Activated naive CD8-positive, alpha-beta T cell treated with anti-CD3 and anti-CD28 coated beads, Interleukin-2, amount 10 ng/mL, durations not matched to agents 7 days and 5 days (primary cell): ENCODE measurements at regions of chr7 and their contacts with region 1.

Region 1: DNA sequence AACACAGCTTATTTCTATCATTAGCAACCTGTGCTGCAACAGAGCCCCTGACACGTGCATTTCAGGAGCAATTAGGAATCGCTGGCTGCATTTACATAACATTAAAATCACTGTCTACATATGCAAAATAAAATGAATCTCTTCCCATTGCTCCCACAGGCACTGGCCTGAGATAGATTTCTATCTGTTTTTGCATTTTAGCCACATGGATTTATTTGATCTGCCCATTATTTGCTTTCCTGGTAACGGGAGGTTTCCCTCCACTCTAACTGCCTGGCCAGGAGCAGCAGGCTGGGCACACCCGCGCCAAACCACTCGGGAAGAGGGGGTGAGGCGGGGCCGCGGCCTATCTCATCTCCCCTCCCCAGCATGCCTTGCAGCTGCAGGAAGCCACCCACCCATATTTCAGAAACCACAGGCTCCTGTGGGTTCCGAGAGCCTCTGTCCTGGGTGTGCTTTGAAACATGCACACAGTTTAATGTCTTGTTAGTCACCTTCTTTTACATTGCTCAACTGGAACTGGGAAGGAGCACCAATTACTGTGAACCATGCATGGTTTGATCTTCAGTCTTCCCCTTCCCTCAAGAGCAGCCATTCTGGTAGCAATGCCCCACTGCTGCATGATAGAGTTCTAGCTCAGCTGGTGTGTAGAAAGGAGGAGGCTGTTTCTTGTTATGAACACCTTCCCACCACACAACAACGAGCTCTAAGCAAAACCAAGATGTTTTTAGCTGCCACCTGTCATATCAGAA is 37.7 kb upstream of the IKZF1 start:
- DNase-seq: peak; percentile 80
- ATAC-seq: peak; percentile 65
- H3K4me3 Mint-ChIP-seq: peak overlapping the region; percentile 78
- H3K27ac Mint-ChIP-seq: peak overlapping the region; percentile 88
- H3K4me1 Mint-ChIP-seq: peaks cover 77% of the 10 kb centered on the region
- H3K27me3 Mint-ChIP-seq: no peaks in the 10 kb centered on the region

Region 2: GRCh38 chr7:50197549-50197948 is 69.3 kb before region 1 on chr7:
- POLR2A ChIA-PET with region 1: no interaction called
- DNase-seq: no peak
- ATAC-seq: no peak
- H3K4me3 Mint-ChIP-seq: no peak overlapping the region
- H3K27ac Mint-ChIP-seq: no peak overlapping the region
- H3K4me1 Mint-ChIP-seq: peaks cover 6% of the 10 kb centered on the region
- H3K27me3 Mint-ChIP-seq: peaks cover 3% of the 10 kb centered on the region

Region 3: GRCh38 chr7:50212666-50213621 is 53.9 kb before region 1 on chr7:
- POLR2A ChIA-PET with region 1: interaction called, 68 read pairs
- DNase-seq: no peak
- ATAC-seq: peak; percentile 77
- H3K4me3 Mint-ChIP-seq: peak overlapping the region; percentile 56
- H3K27ac Mint-ChIP-seq: peak overlapping the region; percentile 86
- H3K4me1 Mint-ChIP-seq: peaks cover 88% of the 10 kb centered on the region
- H3K27me3 Mint-ChIP-seq: no peaks in the 10 kb centered on the region

Region 4: DNA sequence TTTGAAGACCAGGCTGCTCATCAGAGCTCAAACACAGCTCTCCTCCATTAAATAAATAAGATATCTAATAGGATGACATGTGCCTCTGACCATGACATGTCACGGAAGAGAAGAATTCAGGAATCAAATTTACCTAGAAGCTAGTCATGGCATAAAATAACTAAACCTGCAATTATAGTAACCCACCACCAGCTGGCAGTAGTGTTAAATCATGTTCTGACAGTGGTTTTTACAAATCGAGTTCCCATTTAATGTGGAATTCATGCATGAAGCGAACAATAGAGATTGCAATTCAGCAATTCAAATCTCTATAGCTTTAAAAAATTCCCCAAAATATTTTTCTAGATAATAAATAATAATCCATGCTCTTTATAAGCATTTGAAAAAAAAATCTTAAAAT is 36.8 kb before region 1 on chr7:
- POLR2A ChIA-PET with region 1: interaction called, 35 read pairs
- DNase-seq: no peak
- ATAC-seq: no peak
- H3K4me3 Mint-ChIP-seq: no peak overlapping the region
- H3K27ac Mint-ChIP-seq: no peak overlapping the region
- H3K4me1 Mint-ChIP-seq: peaks cover 39% of the 10 kb centered on the region
- H3K27me3 Mint-ChIP-seq: no peaks in the 10 kb centered on the region

Region 5: GRCh38 chr7:50281680-50282445 is 15.1 kb after region 1 on chr7:
- POLR2A ChIA-PET with region 1: interaction called, 61 read pairs
- DNase-seq: no peak
- ATAC-seq: peak; percentile 83
- H3K4me3 Mint-ChIP-seq: peak overlapping the region; percentile 82
- H3K27ac Mint-ChIP-seq: peak overlapping the region; percentile 86
- H3K4me1 Mint-ChIP-seq: peaks cover 41% of the 10 kb centered on the region
- H3K27me3 Mint-ChIP-seq: no peaks in the 10 kb centered on the region